CD4-positive, alpha-beta memory T cell (primary cell): ENCODE measurements at regions of chr17 and their contacts with region 1.

Region 1: DNA sequence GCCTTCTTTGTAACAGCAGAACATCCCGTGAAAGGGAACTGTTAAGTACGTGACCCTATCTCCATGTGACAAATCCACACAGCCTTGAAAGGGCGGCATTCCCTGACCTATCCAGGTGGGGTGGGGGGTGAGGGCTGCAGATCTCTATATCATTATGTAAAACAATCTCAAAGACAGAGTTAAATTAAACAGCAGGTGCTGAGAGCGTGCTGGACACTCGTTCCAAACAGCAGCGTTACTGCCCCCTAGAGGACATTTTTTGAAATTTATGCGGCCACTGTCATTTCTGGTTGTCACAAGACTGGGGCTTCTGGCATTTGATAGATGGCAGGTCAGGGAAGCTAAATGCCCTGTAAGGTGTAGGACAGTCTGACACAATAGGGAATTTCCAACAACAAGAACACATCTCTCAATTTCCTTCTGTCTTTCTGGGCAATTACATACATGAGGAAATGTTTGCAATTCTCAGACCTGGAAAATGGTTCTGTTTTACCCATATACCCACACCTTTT is 6.7 kb upstream of the SLC25A39 start:
- DNase-seq: peak; percentile 69 to 79 (median 74)
- H3K4me3 ChIP-seq: no peak overlapping the region
- H3K4me3 Mint-ChIP-seq: peak overlapping the region in 1 of 8 donors; percentile 39
- H3K27ac ChIP-seq: no peak overlapping the region
- H3K27ac Mint-ChIP-seq: peak overlapping the region in 3 of 7 donors; percentile 25 to 77 (median 70)
- H3K4me1 ChIP-seq: peaks cover 4% of the 10 kb centered on the region
- H3K4me1 Mint-ChIP-seq: peaks cover 10 to 23% (median 14%) of the 10 kb centered on the region in 4 donors
- H3K27me3 ChIP-seq: no peaks in the 10 kb centered on the region
- H3K27me3 Mint-ChIP-seq: no peaks in the 10 kb centered on the region

Region 2: DNA sequence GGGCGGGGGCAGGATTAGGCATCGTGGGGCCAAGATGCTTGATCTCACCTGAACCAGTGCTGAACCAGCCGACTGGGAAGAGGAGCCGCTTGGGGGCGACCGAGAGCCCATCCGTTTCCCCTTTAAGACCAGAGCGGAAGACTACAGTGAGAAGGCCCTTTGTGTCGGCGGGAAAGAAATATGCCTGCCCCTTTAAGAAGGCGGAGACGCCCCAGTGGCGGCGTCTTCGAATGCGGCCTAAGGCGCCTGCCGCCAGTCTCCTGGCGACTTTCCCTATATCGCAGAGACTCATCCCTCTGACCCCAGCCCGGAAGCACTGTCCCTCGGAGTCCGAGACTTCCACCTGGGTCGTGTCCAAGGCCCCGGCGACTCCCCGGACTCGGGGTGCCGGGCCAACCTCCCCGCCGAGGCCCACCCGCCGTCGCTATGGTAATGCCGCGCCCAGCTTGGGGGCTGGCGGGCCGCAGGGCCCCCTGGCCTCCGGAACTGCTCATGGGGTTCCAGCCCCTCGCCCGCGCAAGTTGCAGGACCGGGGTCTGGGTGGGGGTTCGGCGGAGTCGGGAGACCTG is 189.5 kb before region 1 on chr17 and contains the start of gene HROB:
- CTCF ChIA-PET with region 1: interaction called, 3 read pairs
- POLR2A ChIA-PET with region 1: no interaction called
- intact Hi-C with region 1: loop called (anchors 1 kb)
- DNase-seq: peak; percentile 96 to 99 (median 97)
- H3K4me3 ChIP-seq: peak within 1 kb of the TSS; percentile 66 to 69
- H3K4me3 Mint-ChIP-seq: peak within 1 kb of the TSS; percentile 77 to 94 (median 84)
- H3K27ac ChIP-seq: peak within 1 kb of the TSS; percentile 79
- H3K27ac Mint-ChIP-seq: peak within 1 kb of the TSS; percentile 88 to 95 (median 90)
- H3K4me1 ChIP-seq: peaks cover 14% of the 10 kb centered on the region
- H3K4me1 Mint-ChIP-seq: peaks cover 2 to 19% (median 10%) of the 10 kb centered on the region in 4 donors
- H3K27me3 ChIP-seq: no peaks in the 10 kb centered on the region
- H3K27me3 Mint-ChIP-seq: peaks cover 7% of the 10 kb centered on the region in 2 donors
- total RNA-seq, gene HROB: 0.36 to 0.64 TPM

Region 3: DNA sequence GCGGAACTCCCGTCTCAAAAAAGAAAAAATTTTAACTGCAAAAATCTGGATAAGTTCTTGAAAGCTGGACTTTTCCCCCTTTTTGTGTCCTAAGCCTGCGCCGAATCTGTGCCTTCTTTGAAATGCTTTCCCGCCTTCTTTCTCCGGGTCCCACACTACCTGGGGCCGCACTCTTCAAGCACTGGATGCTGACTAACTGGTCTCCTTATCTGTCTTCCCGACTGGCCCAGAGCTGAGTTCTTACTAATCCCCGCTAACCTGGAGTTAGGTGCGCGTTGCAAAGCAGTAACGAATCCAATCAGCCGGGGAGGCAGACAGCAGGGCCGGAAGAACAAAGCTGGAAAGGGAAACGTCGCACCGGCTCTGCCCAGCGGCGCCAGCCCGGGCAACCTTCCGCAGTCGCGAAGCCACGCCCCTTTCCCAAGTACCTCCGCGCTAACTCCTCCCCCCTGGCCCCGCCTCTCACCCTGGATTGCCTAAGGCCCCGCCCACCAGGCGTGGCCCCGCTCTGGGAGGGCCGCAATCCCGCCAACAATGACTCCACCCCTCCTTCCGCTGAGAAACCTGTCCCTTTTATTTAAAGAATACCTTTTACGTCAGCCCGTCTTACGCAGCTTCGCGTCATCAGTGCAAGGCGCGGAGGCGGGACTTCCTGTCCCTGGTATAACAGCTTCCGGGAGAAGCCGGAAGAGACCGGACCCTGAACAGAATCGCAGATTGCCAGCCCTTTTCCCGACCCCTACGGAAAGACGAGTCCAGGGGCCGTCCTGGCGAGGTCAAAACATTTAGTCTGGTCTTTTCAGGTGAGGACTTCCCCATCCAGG is 144.8 kb before region 1 on chr17 and contains the start of gene TMUB2:
- CTCF ChIA-PET with region 1: interaction called, 10 read pairs
- POLR2A ChIA-PET with region 1: interaction called, 43 read pairs
- intact Hi-C with region 1: no loop called
- DNase-seq: peak; percentile 99 to 100 (median 99)
- H3K4me3 ChIP-seq: peak within 1 kb of the TSS; percentile 96 to 98
- H3K4me3 Mint-ChIP-seq: peak within 1 kb of the TSS; percentile 97 to 100 (median 99)
- H3K27ac ChIP-seq: peak within 1 kb of the TSS; percentile 98
- H3K27ac Mint-ChIP-seq: peak within 1 kb of the TSS; percentile 96 to 100 (median 100)
- H3K4me1 ChIP-seq: peaks cover 44% of the 10 kb centered on the region
- H3K4me1 Mint-ChIP-seq: peaks cover 34 to 67% (median 51%) of the 10 kb centered on the region in 4 donors
- H3K27me3 ChIP-seq: no peaks in the 10 kb centered on the region
- H3K27me3 Mint-ChIP-seq: no peaks in the 10 kb centered on the region
- total RNA-seq, gene TMUB2: 45.4 to 47.9 TPM

Region 4: GRCh38 chr17:44199553-44200477 is 131.5 kb before region 1 on chr17 and contains the start of gene ATXN7L3:
- CTCF ChIA-PET with region 1: interaction called, 10 read pairs
- POLR2A ChIA-PET with region 1: interaction called, 36 read pairs
- intact Hi-C with region 1: no loop called
- DNase-seq: peak; percentile 96 to 99 (median 98)
- H3K4me3 ChIP-seq: peak within 1 kb of the TSS; percentile 82 to 88
- H3K4me3 Mint-ChIP-seq: peak within 1 kb of the TSS; percentile 90 to 94 (median 92)
- H3K27ac ChIP-seq: peak within 1 kb of the TSS; percentile 82
- H3K27ac Mint-ChIP-seq: peak within 1 kb of the TSS; percentile 89 to 98 (median 96)
- H3K4me1 ChIP-seq: peaks cover 43% of the 10 kb centered on the region
- H3K4me1 Mint-ChIP-seq: peaks cover 30 to 58% (median 40%) of the 10 kb centered on the region in 4 donors
- H3K27me3 ChIP-seq: no peaks in the 10 kb centered on the region
- H3K27me3 Mint-ChIP-seq: no peaks in the 10 kb centered on the region
- total RNA-seq, gene ATXN7L3: 123 to 128 TPM

Region 5: GRCh38 chr17:44293509-44294226 is 37.6 kb before region 1 on chr17:
- CTCF ChIA-PET with region 1: no interaction called
- POLR2A ChIA-PET with region 1: no interaction called
- intact Hi-C with region 1: no loop called
- DNase-seq: no peak
- H3K4me3 ChIP-seq: no peak overlapping the region
- H3K4me3 Mint-ChIP-seq: no peak overlapping the region
- H3K27ac ChIP-seq: no peak overlapping the region
- H3K27ac Mint-ChIP-seq: no peak overlapping the region
- H3K4me1 ChIP-seq: no peaks in the 10 kb centered on the region
- H3K4me1 Mint-ChIP-seq: no peaks in the 10 kb centered on the region
- H3K27me3 ChIP-seq: no peaks in the 10 kb centered on the region
- H3K27me3 Mint-ChIP-seq: peaks cover 4 to 14% of the 10 kb centered on the region in 2 donors

Region 6: GRCh38 chr17:44308320-44308818 is 22.9 kb before region 1 on chr17 and contains the start of gene RUNDC3A:
- CTCF ChIA-PET with region 1: interaction called, 11 read pairs
- POLR2A ChIA-PET with region 1: interaction called, 10 read pairs
- intact Hi-C with region 1: no loop called
- DNase-seq: peak; percentile 81 to 85 (median 82)
- H3K4me3 ChIP-seq: no peak within 1 kb of the TSS
- H3K4me3 Mint-ChIP-seq: peak within 1 kb of the TSS; percentile 19 to 80 (median 58)
- H3K27ac ChIP-seq: no peak within 1 kb of the TSS
- H3K27ac Mint-ChIP-seq: peak within 1 kb of the TSS in 2 of 7 donors; percentile 43 to 50
- H3K4me1 ChIP-seq: peaks cover 16% of the 10 kb centered on the region
- H3K4me1 Mint-ChIP-seq: peaks cover 0 to 26% (median 19%) of the 10 kb centered on the region in 4 donors
- H3K27me3 ChIP-seq: peaks cover 3% of the 10 kb centered on the region
- H3K27me3 Mint-ChIP-seq: peaks cover 10 to 32% of the 10 kb centered on the region in 2 donors
- total RNA-seq, gene RUNDC3A: 0.19 TPM in 1 of 2 experiments, not detected in the other

Region 7: DNA sequence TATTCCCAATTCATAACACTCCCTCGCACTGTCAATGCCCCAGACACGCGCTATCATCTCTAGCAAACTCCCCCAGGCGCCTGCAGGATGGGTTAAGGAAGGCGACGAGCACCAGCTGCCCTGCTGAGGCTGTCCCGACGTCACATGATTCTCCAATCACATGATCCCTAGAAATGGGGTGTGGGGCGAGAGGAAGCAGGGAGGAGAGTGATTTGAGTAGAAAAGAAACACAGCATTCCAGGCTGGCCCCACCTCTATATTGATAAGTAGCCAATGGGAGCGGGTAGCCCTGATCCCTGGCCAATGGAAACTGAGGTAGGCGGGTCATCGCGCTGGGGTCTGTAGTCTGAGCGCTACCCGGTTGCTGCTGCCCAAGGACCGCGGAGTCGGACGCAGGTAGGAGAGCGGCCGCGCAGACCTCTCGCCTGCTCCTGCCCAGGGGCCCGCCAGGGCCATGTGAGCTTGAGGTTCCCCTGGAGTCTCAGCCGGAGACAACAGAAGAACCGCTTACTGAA is 13.7 kb after region 1 on chr17 and contains the start of gene GRN:
- CTCF ChIA-PET with region 1: interaction called, 32 read pairs
- POLR2A ChIA-PET with region 1: interaction called, 22 read pairs
- intact Hi-C with region 1: loop called (anchors 2 kb)
- DNase-seq: peak; percentile 81 to 87 (median 84)
- H3K4me3 ChIP-seq: peak within 1 kb of the TSS; percentile 90 to 97
- H3K4me3 Mint-ChIP-seq: peak within 1 kb of the TSS; percentile 90 to 97 (median 92)
- H3K27ac ChIP-seq: peak within 1 kb of the TSS; percentile 57
- H3K27ac Mint-ChIP-seq: peak within 1 kb of the TSS; percentile 69 to 88 (median 82)
- H3K4me1 ChIP-seq: peaks cover 10% of the 10 kb centered on the region
- H3K4me1 Mint-ChIP-seq: peaks cover 10 to 31% (median 19%) of the 10 kb centered on the region in 4 donors
- H3K27me3 ChIP-seq: no peaks in the 10 kb centered on the region
- H3K27me3 Mint-ChIP-seq: peaks cover 0 to 6% of the 10 kb centered on the region in 2 donors
- total RNA-seq, gene GRN: 49.5 to 50.0 TPM